Activated naive CD4-positive, alpha-beta T cell treated with anti-CD3 and anti-CD28 coated beads, Interleukin-2, amount 10 ng/mL, durations not matched to agents 7 days and 5 days (primary cell): ENCODE measurements at regions of chr7 and their contacts with region 1.

Region 1: DNA sequence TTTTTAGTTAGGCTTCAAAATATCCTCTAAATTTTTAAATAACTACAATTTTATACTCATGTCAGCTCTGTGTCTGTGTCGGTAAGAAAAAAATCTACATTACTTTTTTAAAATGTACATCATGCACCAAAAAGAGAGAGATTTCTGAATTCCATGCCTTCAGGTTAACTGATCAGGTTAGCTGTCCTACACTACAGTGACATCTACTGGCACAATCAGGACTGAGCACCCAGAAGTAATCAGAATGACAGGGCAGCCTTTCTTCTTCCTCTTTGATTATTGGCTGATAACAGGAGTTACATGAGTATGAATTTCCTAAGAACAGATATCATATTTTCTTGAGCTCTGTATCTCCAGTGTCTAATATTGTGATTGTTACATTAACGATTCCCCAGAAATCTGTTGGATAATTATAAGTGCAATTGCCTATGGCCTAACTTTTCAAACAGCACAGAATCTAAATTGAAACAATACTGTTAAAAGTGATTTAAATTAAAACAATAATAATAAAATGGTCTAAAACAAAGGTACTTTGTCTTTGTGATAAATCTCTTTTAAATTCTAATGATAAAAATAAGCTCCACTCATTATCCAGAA is 41.8 kb upstream of the HYCC1 start:
- DNase-seq: peak; percentile 75
- H3K4me3 Mint-ChIP-seq: no peak overlapping the region
- H3K27ac Mint-ChIP-seq: no peak overlapping the region
- H3K4me1 Mint-ChIP-seq: no peaks in the 10 kb centered on the region
- H3K27me3 Mint-ChIP-seq: peaks cover 10% of the 10 kb centered on the region

Region 2: DNA sequence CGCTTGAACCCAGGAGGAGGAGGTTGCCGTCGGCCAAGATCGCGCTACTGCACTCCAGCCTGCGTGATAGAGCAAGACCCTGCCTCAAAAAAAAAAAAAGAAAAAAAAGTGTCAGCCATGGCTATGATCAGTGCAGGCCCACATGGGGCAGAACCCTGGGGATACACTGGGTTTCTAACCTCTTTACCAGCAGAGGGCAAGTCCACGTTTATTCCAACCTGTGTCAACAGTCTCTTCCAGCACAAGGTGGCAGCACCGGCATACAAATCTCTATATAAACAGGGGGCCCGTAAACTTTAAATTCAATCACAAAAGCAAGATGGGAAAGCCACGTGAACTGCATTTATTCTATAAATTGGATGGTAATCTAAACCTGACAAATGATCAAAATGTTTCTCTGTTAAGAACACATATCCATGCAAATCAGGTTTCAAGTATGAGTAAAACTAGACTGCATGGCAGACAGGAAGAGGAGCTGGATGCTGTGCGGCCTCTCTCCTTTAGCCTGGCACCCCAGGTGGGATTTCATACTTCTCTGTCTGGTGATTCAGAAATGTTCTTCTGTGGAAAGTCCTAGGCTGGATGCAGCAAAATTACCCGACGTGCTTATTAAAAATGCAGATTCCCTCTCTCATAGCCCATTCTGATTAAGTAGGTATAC is 495.7 kb before region 1 on chr7:
- CTCF ChIA-PET with region 1: interaction called, 67 read pairs
- DNase-seq: peak; percentile 85
- H3K4me3 Mint-ChIP-seq: no peak overlapping the region
- H3K27ac Mint-ChIP-seq: no peak overlapping the region
- H3K4me1 Mint-ChIP-seq: peaks cover 48% of the 10 kb centered on the region
- H3K27me3 Mint-ChIP-seq: peaks cover 21% of the 10 kb centered on the region

Region 3: DNA sequence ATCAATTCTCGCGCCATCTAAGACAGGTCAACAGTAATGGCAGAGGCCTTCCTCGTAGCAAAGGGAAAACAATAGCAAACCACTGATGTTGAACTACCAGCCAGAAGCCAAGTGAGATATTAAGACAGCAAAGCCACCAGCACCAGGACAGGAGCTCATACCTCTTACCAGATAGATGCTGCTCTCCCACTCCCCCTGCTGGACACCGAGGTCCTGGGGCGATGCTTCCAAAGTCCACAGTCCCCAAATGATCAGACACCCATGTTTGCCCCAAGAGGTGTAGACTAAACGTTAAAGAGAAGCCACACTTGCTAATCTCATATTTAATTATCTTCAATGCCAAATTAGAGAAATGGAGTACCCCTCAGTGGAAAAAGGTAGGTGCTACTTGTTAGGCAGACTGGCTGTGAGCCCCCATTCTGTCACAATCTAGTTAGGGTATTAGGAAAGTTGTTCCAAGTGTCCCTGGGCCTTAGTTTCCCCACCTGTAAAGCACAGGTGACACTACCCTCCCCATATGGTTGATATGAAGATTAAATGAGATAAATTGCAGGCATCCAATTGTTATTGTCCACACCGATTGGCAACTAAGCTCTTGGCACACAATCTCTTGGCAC is 273.0 kb before region 1 on chr7:
- CTCF ChIA-PET with region 1: interaction called, 31 read pairs
- DNase-seq: peak; percentile 88
- H3K4me3 Mint-ChIP-seq: no peak overlapping the region
- H3K27ac Mint-ChIP-seq: no peak overlapping the region
- H3K4me1 Mint-ChIP-seq: no peaks in the 10 kb centered on the region
- H3K27me3 Mint-ChIP-seq: peaks cover 19% of the 10 kb centered on the region

Region 4: GRCh38 chr7:22860784-22861482 is 194.7 kb before region 1 on chr7:
- CTCF ChIA-PET with region 1: interaction called, 12 read pairs
- DNase-seq: peak; percentile 35
- H3K4me3 Mint-ChIP-seq: no peak overlapping the region
- H3K27ac Mint-ChIP-seq: no peak overlapping the region
- H3K4me1 Mint-ChIP-seq: peaks cover 30% of the 10 kb centered on the region
- H3K27me3 Mint-ChIP-seq: no peaks in the 10 kb centered on the region

Region 5: GRCh38 chr7:23013715-23014649 is 41.7 kb before region 1 on chr7 and contains the start of gene HYCC1:
- CTCF ChIA-PET with region 1: interaction called, 23 read pairs
- DNase-seq: peak; percentile 99
- H3K4me3 Mint-ChIP-seq: peak within 1 kb of the TSS; percentile 96
- H3K27ac Mint-ChIP-seq: peak within 1 kb of the TSS; percentile 95
- H3K4me1 Mint-ChIP-seq: peaks cover 41% of the 10 kb centered on the region
- H3K27me3 Mint-ChIP-seq: no peaks in the 10 kb centered on the region

Region 6: DNA sequence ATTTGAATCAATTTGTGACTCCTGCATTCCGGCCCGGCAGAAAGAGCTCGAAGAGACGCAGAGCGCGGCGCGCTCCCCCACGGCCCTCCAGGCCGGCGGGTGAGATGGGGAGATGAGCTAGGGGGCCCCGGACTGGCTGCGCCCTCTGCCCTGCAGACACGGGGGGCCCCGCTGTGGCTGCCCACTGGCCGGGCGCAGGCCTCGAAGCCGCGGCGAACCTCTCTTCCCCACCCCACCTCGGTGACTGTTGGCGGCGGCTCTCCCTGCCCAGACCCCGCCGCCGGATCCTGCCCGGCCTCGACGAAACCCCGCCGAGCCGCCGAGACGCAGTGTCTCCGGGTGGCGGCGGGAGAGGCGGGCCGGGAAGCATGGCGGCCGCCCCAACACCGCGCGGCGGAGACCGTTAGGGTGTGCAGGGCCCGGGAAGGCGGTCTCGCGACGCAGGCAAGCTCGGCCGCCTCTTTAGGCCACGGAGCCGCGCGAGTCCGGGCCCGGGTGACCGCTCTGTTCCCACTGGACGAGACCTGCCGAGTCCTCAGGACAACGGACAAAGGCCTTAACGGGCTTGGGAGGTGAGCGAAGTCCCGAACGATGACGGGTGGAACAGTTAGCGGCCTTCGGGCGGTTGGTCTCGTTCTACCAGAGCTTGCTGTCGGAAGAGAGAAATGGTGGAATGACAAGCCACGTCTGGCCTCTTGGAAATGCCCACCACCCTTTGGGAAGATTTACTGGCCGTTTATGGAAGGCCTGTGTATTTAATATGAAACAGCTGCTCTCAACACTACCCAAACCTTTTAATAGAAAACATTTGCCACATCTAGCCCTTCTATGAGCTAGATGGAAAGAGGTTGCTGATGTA is 150.5 kb after region 1 on chr7:
- CTCF ChIA-PET with region 1: no interaction called
- DNase-seq: no peak
- H3K4me3 Mint-ChIP-seq: no peak overlapping the region
- H3K27ac Mint-ChIP-seq: no peak overlapping the region
- H3K4me1 Mint-ChIP-seq: peaks cover 8% of the 10 kb centered on the region
- H3K27me3 Mint-ChIP-seq: peaks cover 27% of the 10 kb centered on the region

Region 7: GRCh38 chr7:23334482-23335056 is 278.9 kb after region 1 on chr7:
- CTCF ChIA-PET with region 1: no interaction called
- DNase-seq: no peak
- H3K4me3 Mint-ChIP-seq: no peak overlapping the region
- H3K27ac Mint-ChIP-seq: no peak overlapping the region
- H3K4me1 Mint-ChIP-seq: no peaks in the 10 kb centered on the region
- H3K27me3 Mint-ChIP-seq: peaks cover 40% of the 10 kb centered on the region